ENCODE measurements at regions of chr1 and their contacts with region 1.

Region 1: GRCh38 chr1:23403735-23404486 is 20.6 kb downstream of the TCEA3 start:
- DNase-seq: peak; percentile 59
- H3K4me3 ChIP-seq: no peak overlapping the region
- H3K27me3 ChIP-seq: no peaks in the 10 kb centered on the region
- CTCF ChIP-seq: peak; percentile 95

Region 2: GRCh38 chr1:23337869-23338268 is 66.0 kb before region 1 on chr1:
- CTCF ChIA-PET with region 1: interaction called, 10 read pairs
- POLR2A ChIA-PET with region 1: interaction called, 3 read pairs
- DNase-seq: no peak
- H3K4me3 ChIP-seq: no peak overlapping the region
- H3K27me3 ChIP-seq: no peaks in the 10 kb centered on the region
- CTCF ChIP-seq: no peak

Region 3: GRCh38 chr1:23367791-23368561 is 35.9 kb before region 1 on chr1:
- CTCF ChIA-PET with region 1: interaction called, 16 read pairs
- POLR2A ChIA-PET with region 1: interaction called, 3 read pairs
- DNase-seq: peak; percentile 93
- H3K4me3 ChIP-seq: peak overlapping the region; percentile 61
- H3K27me3 ChIP-seq: no peaks in the 10 kb centered on the region
- CTCF ChIP-seq: no peak

Region 4: GRCh38 chr1:23384302-23385058 is 19.4 kb before region 1 on chr1:
- CTCF ChIA-PET with region 1: interaction called, 14 read pairs
- POLR2A ChIA-PET with region 1: no interaction called
- DNase-seq: no peak
- H3K4me3 ChIP-seq: no peak overlapping the region
- H3K27me3 ChIP-seq: no peaks in the 10 kb centered on the region
- CTCF ChIP-seq: no peak

Region 5: GRCh38 chr1:23422241-23423030 is 18.5 kb after region 1 on chr1:
- CTCF ChIA-PET with region 1: interaction called, 23 read pairs
- POLR2A ChIA-PET with region 1: no interaction called
- DNase-seq: no peak
- H3K4me3 ChIP-seq: no peak overlapping the region
- H3K27me3 ChIP-seq: no peaks in the 10 kb centered on the region
- CTCF ChIP-seq: no peak

Region 6: GRCh38 chr1:23475134-23475628 is 71.3 kb after region 1 on chr1:
- CTCF ChIA-PET with region 1: no interaction called
- POLR2A ChIA-PET with region 1: no interaction called
- DNase-seq: peak; percentile 82
- H3K4me3 ChIP-seq: no peak overlapping the region
- H3K27me3 ChIP-seq: no peaks in the 10 kb centered on the region
- CTCF ChIP-seq: no peak

Measured in BJ (cell line).